ENCODE measurements at regions of chr1 and their contacts with region 1.

Region 1: GRCh38 chr1:153510984-153511410 is 24.8 kb downstream of the S100A6 start:
- DNase-seq: peak; percentile 81
- ATAC-seq: peak; percentile 91
- H3K4me3 ChIP-seq: no peak overlapping the region
- H3K4me3 Mint-ChIP-seq: no peak overlapping the region
- H3K27ac ChIP-seq: no peak overlapping the region
- H3K27ac Mint-ChIP-seq: no peak overlapping the region
- H3K4me1 ChIP-seq: no peaks in the 10 kb centered on the region
- H3K4me1 Mint-ChIP-seq: no peaks in the 10 kb centered on the region
- H3K27me3 ChIP-seq: no peaks in the 10 kb centered on the region
- H3K27me3 Mint-ChIP-seq: peaks cover 4% of the 10 kb centered on the region
- CTCF ChIP-seq: peak; percentile 94

Region 2: DNA sequence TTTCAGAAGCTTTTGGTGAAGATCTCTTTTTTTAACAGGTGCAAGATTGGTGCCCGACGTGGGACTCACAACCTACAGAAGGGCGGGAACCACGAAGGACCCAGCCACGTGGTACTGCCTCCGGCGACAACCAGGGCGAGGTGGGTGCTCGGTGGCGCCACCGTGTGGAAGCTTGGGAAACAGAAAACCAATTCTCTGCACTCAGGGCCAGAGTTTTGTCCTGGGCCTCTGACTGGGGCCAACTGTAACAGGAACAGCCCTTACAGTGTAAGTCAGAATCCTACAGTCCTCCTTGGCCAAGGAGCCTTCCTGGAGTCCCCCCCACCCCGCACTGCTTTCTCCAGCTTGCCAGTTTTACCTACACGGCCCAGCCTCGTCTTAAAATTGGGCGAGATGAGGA is 106.2 kb before region 1 on chr1:
- CTCF ChIA-PET with region 1: no interaction called
- POLR2A ChIA-PET with region 1: no interaction called
- intact Hi-C with region 1: no loop called
- DNase-seq: peak; percentile 41
- ATAC-seq: no peak
- H3K4me3 ChIP-seq: no peak overlapping the region
- H3K4me3 Mint-ChIP-seq: no peak overlapping the region
- H3K27ac ChIP-seq: no peak overlapping the region
- H3K27ac Mint-ChIP-seq: no peak overlapping the region
- H3K4me1 ChIP-seq: no peaks in the 10 kb centered on the region
- H3K4me1 Mint-ChIP-seq: no peaks in the 10 kb centered on the region
- H3K27me3 ChIP-seq: peaks cover 0 to 5% (median 3%) of the 10 kb centered on the region in 4 experiments
- H3K27me3 Mint-ChIP-seq: peaks cover 44% of the 10 kb centered on the region
- CTCF ChIP-seq: peak; percentile 56

Region 3: DNA sequence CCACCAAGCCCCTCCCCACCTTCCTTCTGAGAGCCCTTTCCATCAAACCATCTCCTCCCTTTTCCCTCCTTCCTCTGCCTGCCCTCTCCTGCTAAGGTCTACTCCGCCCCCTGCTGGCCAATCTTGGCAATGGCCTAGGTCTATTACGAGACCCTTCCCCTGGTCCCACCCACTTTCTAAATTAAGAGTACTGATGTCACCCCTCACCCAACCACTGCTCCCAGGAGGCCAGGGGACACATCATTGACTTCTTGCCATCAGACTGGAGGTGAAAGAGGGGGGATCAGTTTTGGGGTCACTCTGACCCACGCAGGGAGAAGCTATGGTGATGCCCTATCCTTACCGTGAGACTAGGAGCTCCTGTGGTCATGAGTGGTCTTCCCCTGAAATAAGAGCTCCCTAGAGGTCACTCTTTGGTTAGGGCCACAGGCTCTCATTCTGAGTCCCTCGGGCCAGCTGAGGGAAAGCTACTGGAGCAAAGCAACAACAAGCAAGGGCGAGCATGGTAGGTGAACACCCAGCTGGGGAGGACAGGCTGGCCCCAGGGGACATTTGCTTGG is 15.9 kb before region 1 on chr1:
- CTCF ChIA-PET with region 1: interaction called, 27 read pairs
- POLR2A ChIA-PET with region 1: no interaction called
- intact Hi-C with region 1: no loop called
- DNase-seq: peak; percentile 80
- ATAC-seq: peak; percentile 83
- H3K4me3 ChIP-seq: no peak overlapping the region
- H3K4me3 Mint-ChIP-seq: peak overlapping the region; percentile 41
- H3K27ac ChIP-seq: no peak overlapping the region
- H3K27ac Mint-ChIP-seq: peak overlapping the region; percentile 5
- H3K4me1 ChIP-seq: peaks cover 8% of the 10 kb centered on the region in 2 donors
- H3K4me1 Mint-ChIP-seq: peaks cover 10% of the 10 kb centered on the region
- H3K27me3 ChIP-seq: peaks cover 0 to 17% (median 6%) of the 10 kb centered on the region in 4 experiments
- H3K27me3 Mint-ChIP-seq: peaks cover 40% of the 10 kb centered on the region
- CTCF ChIP-seq: peak; percentile 88

Region 4: GRCh38 chr1:153545067-153546055 is 34.4 kb after region 1 on chr1 and contains the start of gene S100A4:
- CTCF ChIA-PET with region 1: interaction called, 11 read pairs
- POLR2A ChIA-PET with region 1: no interaction called
- intact Hi-C with region 1: no loop called
- DNase-seq: peak; percentile 55
- ATAC-seq: peak; percentile 77
- H3K4me3 ChIP-seq: peak within 1 kb of the TSS; percentile 33 to 80 (median 49)
- H3K4me3 Mint-ChIP-seq: peak within 1 kb of the TSS; percentile 90
- H3K27ac ChIP-seq: peak within 1 kb of the TSS; percentile 70 to 82
- H3K27ac Mint-ChIP-seq: peak within 1 kb of the TSS; percentile 96
- H3K4me1 ChIP-seq: peaks cover 36 to 42% of the 10 kb centered on the region in 2 donors
- H3K4me1 Mint-ChIP-seq: peaks cover 53% of the 10 kb centered on the region
- H3K27me3 ChIP-seq: peaks cover 0 to 5% (median 0%) of the 10 kb centered on the region in 4 experiments
- H3K27me3 Mint-ChIP-seq: no peaks in the 10 kb centered on the region
- CTCF ChIP-seq: no peak
- total RNA-seq, gene S100A4: 58.0 and 62.7 TPM in 2 replicates

Region 5: DNA sequence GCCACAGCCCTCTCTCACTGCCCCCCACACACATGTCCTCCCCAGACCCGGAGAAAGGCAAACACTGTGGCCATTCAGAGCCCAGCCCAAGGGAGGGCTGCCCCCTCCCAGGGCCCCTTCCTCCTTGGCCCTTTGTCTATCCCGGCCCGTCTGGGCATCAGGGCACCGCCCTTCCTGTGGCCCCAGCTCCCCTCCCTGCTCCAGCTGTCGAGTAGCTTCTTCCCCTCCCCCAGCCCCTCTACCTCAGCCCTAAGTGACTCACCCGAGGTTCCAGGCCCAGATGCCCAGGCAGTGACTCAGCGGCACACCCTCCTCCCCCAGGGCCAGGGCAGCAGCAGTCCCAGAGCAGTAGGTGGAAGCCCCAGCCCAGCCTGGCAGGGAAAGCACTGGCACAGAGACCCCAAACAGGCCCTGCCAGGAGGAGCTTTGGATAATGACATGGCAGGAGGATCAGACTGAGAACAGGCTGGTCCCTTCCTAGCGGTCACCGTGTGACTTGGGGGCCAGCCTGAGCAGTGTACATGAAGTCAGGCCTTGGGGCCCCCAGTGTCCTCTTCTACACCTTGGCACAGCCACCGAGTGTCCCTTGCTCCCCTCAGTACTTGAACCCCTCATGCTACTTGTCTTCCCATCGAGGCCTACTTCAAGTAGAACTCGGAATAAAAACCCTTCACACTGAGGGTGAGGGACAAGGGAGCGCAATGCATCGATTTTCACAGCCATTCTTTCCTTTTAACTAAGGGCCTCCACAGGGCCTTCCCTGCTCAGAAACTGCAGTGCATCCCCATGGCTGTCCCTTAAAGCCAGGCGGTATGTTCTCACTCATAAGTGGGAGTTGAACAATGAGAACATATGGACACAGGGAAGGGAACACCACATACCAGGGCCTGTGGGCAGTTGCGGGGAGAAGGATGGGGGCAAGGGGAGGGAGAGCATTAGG is 55.7 kb after region 1 on chr1:
- CTCF ChIA-PET with region 1: interaction called, 227 read pairs
- POLR2A ChIA-PET with region 1: interaction called, 4 read pairs
- intact Hi-C with region 1: loop called (anchors 1 kb)
- DNase-seq: peak; percentile 50
- ATAC-seq: peak; percentile 80
- H3K4me3 ChIP-seq: no peak overlapping the region
- H3K4me3 Mint-ChIP-seq: peak overlapping the region; percentile 55
- H3K27ac ChIP-seq: peak overlapping the region; percentile 49 to 63
- H3K27ac Mint-ChIP-seq: peak overlapping the region; percentile 85
- H3K4me1 ChIP-seq: peaks cover 12 to 28% of the 10 kb centered on the region in 2 donors
- H3K4me1 Mint-ChIP-seq: peaks cover 30% of the 10 kb centered on the region
- H3K27me3 ChIP-seq: peaks cover 0 to 2% (median 0%) of the 10 kb centered on the region in 4 experiments
- H3K27me3 Mint-ChIP-seq: peaks cover 7% of the 10 kb centered on the region
- CTCF ChIP-seq: no peak

Region 6: DNA sequence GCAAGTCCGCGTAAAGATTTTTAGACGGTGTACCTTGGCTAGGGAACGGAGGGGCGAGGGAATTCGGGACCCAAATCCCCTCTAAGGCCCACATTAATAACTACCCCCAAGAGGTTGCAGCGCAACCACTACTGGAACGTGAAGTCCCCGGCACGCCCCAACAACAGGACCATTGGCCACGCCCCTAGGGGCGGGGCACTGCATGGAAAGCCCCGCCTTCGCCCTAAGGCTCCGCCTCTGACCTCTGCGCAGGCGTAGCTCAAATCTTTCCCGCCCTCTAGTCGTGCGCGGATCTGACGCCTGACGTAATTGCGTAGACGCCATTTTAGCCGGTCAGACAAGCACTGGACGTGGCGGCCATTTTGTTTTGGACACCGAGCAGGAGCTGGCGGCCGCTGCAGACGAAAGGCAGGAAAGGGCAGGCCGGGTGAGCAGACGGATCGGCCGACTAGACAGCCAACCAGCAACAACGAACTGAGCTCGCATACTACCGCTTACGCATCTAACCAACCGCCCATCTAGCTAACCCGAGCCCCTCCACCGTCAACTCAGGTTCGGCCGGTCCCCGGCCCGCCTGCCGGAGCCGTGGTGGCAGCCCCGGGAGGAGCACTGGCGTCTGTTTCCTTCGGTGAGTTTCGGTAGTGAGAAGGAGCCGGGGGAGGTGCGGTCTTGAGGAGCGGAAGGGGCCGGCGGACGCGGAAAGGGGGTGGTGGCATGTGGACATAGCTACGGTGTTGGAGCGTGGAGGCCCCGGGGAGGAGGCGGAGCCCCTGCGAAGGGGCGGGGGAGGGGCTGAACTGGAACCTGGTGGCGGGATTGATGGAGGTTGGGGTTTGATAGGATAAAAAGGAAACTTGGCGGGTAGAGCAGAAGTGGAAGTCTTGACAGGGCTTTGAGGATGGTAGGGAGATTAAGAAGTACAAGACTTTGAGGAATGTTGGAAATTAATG is 123.0 kb after region 1 on chr1 and contains the start of gene CHTOP:
- CTCF ChIA-PET with region 1: interaction called, 7 read pairs
- POLR2A ChIA-PET with region 1: interaction called, 4 read pairs
- intact Hi-C with region 1: loop called (anchors 2 kb)
- DNase-seq: peak; percentile 99
- ATAC-seq: peak; percentile 89
- H3K4me3 ChIP-seq: peak within 1 kb of the TSS; percentile 90 to 100 (median 99)
- H3K4me3 Mint-ChIP-seq: peak within 1 kb of the TSS; percentile 97
- H3K27ac ChIP-seq: peak within 1 kb of the TSS; percentile 97 to 99
- H3K27ac Mint-ChIP-seq: peak within 1 kb of the TSS; percentile 100
- H3K4me1 ChIP-seq: peaks cover 9 to 24% of the 10 kb centered on the region in 2 donors
- H3K4me1 Mint-ChIP-seq: peaks cover 39% of the 10 kb centered on the region
- H3K27me3 ChIP-seq: no peaks in the 10 kb centered on the region
- H3K27me3 Mint-ChIP-seq: no peaks in the 10 kb centered on the region
- CTCF ChIP-seq: no peak
- total RNA-seq, gene CHTOP: 156 TPM in 2 replicates

Region 7: GRCh38 chr1:153749408-153750005 is 238.5 kb after region 1 on chr1:
- CTCF ChIA-PET with region 1: interaction called, 15 read pairs
- POLR2A ChIA-PET with region 1: no interaction called
- intact Hi-C with region 1: no loop called
- DNase-seq: peak; percentile 86
- ATAC-seq: peak; percentile 100
- H3K4me3 ChIP-seq: no peak overlapping the region
- H3K4me3 Mint-ChIP-seq: no peak overlapping the region
- H3K27ac ChIP-seq: no peak overlapping the region
- H3K27ac Mint-ChIP-seq: no peak overlapping the region
- H3K4me1 ChIP-seq: peaks cover 0 to 5% of the 10 kb centered on the region in 2 donors
- H3K4me1 Mint-ChIP-seq: peaks cover 6% of the 10 kb centered on the region
- H3K27me3 ChIP-seq: no peaks in the 10 kb centered on the region
- H3K27me3 Mint-ChIP-seq: no peaks in the 10 kb centered on the region
- CTCF ChIP-seq: peak; percentile 91

Region 8: DNA sequence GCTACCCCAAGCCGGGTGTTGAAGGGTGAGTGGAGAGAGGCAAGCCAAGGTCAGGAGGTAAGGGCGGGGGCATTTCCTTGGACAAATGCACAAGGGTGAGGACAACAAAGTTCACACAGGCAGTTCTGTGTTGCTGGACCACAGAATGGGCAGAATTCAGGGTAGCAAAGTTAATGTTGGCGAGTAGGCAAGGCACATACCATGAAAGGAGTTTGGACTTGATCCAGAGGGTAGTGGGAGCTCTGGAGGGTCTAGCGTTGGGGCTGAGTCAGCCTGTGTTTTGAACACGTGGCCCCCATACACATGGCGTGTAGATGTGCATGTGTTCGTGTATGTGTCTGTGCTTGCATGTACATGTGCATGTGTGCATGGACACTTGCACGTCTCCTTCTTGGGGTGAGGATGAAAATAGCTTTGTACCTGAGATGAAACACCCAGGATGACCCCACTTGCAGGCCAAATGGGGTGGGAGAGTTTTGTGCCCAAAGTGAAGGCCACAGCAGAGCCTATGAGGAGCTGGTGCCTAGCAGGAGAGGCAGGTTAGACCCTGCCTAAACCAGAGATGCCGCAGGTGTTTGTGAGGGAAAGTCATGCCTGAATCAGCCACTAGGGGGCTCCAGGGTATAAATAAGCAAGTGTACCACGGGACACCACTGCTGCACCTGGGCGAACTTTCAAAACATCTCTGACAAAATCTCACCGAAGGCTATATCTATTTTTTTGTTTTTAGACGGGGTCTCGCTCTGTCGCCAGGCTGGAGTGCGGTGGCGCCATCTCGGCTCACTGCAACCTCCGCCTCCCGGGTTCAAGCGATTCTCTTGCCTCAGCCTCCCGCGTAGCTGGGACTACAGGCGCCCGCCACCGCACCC is 286.0 kb after region 1 on chr1:
- CTCF ChIA-PET with region 1: no interaction called
- POLR2A ChIA-PET with region 1: no interaction called
- intact Hi-C with region 1: no loop called
- DNase-seq: peak; percentile 88
- ATAC-seq: peak; percentile 92
- H3K4me3 ChIP-seq: no peak overlapping the region
- H3K4me3 Mint-ChIP-seq: no peak overlapping the region
- H3K27ac ChIP-seq: no peak overlapping the region
- H3K27ac Mint-ChIP-seq: peak overlapping the region; percentile 76
- H3K4me1 ChIP-seq: peaks cover 5 to 18% of the 10 kb centered on the region in 2 donors
- H3K4me1 Mint-ChIP-seq: peaks cover 12% of the 10 kb centered on the region
- H3K27me3 ChIP-seq: no peaks in the 10 kb centered on the region
- H3K27me3 Mint-ChIP-seq: no peaks in the 10 kb centered on the region
- CTCF ChIP-seq: peak; percentile 85